AG04450 (cell line): ENCODE measurements at regions of chr1 and their contacts with region 1.

Region 1: GRCh38 chr1:235971571-235972310 is 93.1 kb downstream of the NID1 start:
- DNase-seq: peak; percentile 85
- H3K4me3 ChIP-seq: peak overlapping the region; percentile 47
- H3K27ac ChIP-seq: peak overlapping the region; percentile 98
- H3K27me3 ChIP-seq: no peaks in the 10 kb centered on the region
- CTCF ChIP-seq: peak; percentile 89

Region 2: DNA sequence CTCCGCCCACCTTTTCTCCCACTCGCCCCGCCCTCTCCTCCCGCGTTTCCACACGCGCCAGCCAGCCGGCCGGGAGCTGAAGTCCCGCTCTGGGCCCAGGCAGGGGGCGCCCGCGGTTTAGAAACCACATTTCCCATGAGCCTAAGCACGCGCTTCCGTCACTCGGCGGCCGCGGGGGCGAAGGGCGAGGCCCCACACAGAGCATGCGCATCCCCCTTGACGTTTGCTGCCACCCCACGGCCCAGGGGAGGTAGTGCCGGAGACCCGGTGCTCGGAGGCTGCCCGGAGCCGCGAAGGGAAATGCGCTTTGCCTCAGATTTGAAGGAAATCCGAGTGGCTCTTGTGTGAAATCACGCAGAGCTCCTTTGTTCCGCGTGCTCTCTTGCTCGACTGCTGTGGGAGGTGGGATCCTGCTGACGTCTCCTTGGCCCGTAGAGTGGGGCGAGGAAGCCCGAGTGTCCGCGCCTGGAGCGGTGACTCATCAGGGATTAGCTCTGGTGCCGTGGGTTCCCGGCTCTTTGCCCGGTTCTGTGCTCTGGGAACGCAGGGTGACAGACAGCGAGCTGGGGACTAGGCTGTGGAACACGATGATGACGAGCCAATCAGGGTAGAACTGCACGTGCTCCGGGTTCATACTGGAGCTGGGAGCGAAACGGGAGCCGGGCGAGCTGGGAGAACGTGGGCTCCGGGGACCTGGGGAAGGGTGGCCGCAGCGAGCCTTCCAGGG is 467.1 kb before region 1 on chr1:
- CTCF ChIA-PET with region 1: interaction called, 21 read pairs
- POLR2A ChIA-PET with region 1: interaction called, 9 read pairs
- DNase-seq: peak; percentile 98
- H3K4me3 ChIP-seq: peak overlapping the region; percentile 87
- H3K27ac ChIP-seq: peak overlapping the region; percentile 99
- H3K27me3 ChIP-seq: no peaks in the 10 kb centered on the region
- CTCF ChIP-seq: peak; percentile 77

Region 3: GRCh38 chr1:235763962-235764361 is 207.8 kb before region 1 on chr1:
- CTCF ChIA-PET with region 1: interaction called, 10 read pairs
- POLR2A ChIA-PET with region 1: no interaction called
- DNase-seq: no peak
- H3K4me3 ChIP-seq: no peak overlapping the region
- H3K27ac ChIP-seq: no peak overlapping the region
- H3K27me3 ChIP-seq: no peaks in the 10 kb centered on the region
- CTCF ChIP-seq: no peak

Region 4: GRCh38 chr1:235821361-235821981 is 150.3 kb before region 1 on chr1:
- CTCF ChIA-PET with region 1: interaction called, 19 read pairs
- POLR2A ChIA-PET with region 1: interaction called, 9 read pairs
- DNase-seq: peak; percentile 66
- H3K4me3 ChIP-seq: no peak overlapping the region
- H3K27ac ChIP-seq: peak overlapping the region; percentile 71
- H3K27me3 ChIP-seq: no peaks in the 10 kb centered on the region
- CTCF ChIP-seq: 0 out of 2 replicates have a peak, but pooled peaks have one; percentile 21

Region 5: GRCh38 chr1:235866913-235867845 is 104.6 kb before region 1 on chr1:
- CTCF ChIA-PET with region 1: interaction called, 73 read pairs
- POLR2A ChIA-PET with region 1: interaction called, 12 read pairs
- DNase-seq: peak; percentile 84
- H3K4me3 ChIP-seq: peak overlapping the region; percentile 90
- H3K27ac ChIP-seq: peak overlapping the region; percentile 73
- H3K27me3 ChIP-seq: no peaks in the 10 kb centered on the region
- CTCF ChIP-seq: no peak

Region 6: DNA sequence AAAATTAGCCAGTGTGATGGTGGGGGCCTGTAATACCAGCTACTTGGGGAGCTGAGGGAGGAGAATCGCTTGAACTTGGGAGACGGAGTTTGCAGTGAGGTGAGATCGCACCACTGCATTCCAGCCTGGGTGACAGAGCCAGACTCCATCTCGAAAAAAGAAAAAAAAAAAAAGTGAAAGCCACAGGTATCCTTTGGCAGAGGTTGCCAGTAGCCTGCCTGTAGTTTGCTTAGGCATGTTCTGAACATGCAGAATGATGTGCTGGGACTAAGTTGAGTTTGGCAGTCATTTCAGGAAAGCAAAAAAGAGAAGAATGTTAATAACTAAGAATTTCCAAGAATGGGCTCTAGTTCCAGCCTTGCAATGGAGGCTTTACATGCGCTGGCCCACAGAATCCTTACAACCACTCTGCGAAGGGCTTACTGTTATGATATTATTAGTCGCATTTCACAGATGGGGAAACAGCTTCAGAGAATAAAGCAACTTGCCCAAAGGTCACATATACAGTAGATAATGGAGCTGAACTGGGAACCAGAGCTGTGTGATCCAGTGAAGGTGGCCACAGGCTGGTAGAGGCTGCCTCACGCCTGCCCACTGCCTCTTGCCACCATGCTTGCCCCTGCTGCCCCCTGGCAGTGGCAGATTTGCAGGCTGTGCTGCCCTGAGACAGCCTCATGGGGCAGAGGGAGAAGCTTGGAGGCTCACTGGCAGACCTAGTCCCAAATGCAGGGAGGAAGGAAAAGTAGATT is 38.5 kb before region 1 on chr1:
- CTCF ChIA-PET with region 1: interaction called, 47 read pairs
- POLR2A ChIA-PET with region 1: interaction called, 6 read pairs
- DNase-seq: no peak
- H3K4me3 ChIP-seq: no peak overlapping the region
- H3K27ac ChIP-seq: no peak overlapping the region
- H3K27me3 ChIP-seq: peaks cover 3% of the 10 kb centered on the region
- CTCF ChIP-seq: no peak

Region 7: GRCh38 chr1:235960809-235961208 is 10.9 kb before region 1 on chr1:
- CTCF ChIA-PET with region 1: interaction called, 98 read pairs
- POLR2A ChIA-PET with region 1: interaction called, 3 read pairs
- DNase-seq: no peak
- H3K4me3 ChIP-seq: no peak overlapping the region
- H3K27ac ChIP-seq: no peak overlapping the region
- H3K27me3 ChIP-seq: no peaks in the 10 kb centered on the region
- CTCF ChIP-seq: no peak